ENCODE measurements at regions of chr1 and their contacts with region 1.

Region 1: GRCh38 chr1:151254217-151255213 is at the start of gene PSMD4:
- DNase-seq: peak; percentile 86 to 98 (median 93)
- ATAC-seq: peak; percentile 89
- H3K4me3 ChIP-seq: peak within 1 kb of the TSS; percentile 66 to 90
- H3K4me3 Mint-ChIP-seq: peak within 1 kb of the TSS; percentile 98
- H3K27ac ChIP-seq: peak within 1 kb of the TSS; percentile 53 to 81
- H3K27ac Mint-ChIP-seq: peak within 1 kb of the TSS; percentile 98
- H3K4me1 ChIP-seq: peaks cover 10% of the 10 kb centered on the region
- H3K4me1 Mint-ChIP-seq: peaks cover 32% of the 10 kb centered on the region
- H3K27me3 ChIP-seq: no peaks in the 10 kb centered on the region
- H3K27me3 Mint-ChIP-seq: no peaks in the 10 kb centered on the region
- CTCF ChIP-seq: no peak
- total RNA-seq, gene PSMD4: 55.1 to 56.7 TPM

Region 2: GRCh38 chr1:150363426-150364230 is 890.9 kb before region 1 on chr1 and contains the start of gene RPRD2:
- CTCF ChIA-PET with region 1: no interaction called
- POLR2A ChIA-PET with region 1: no interaction called
- intact Hi-C with region 1: loop called in 1 of 2 experiments (anchors 5 kb)
- DNase-seq: peak; percentile 97 to 100 (median 98)
- ATAC-seq: peak; percentile 95
- H3K4me3 ChIP-seq: peak within 1 kb of the TSS; percentile 69 to 90
- H3K4me3 Mint-ChIP-seq: peak within 1 kb of the TSS; percentile 99
- H3K27ac ChIP-seq: peak within 1 kb of the TSS; percentile 74 to 94
- H3K27ac Mint-ChIP-seq: peak within 1 kb of the TSS; percentile 99
- H3K4me1 ChIP-seq: peaks cover 7% of the 10 kb centered on the region
- H3K4me1 Mint-ChIP-seq: peaks cover 36% of the 10 kb centered on the region
- H3K27me3 ChIP-seq: no peaks in the 10 kb centered on the region
- H3K27me3 Mint-ChIP-seq: no peaks in the 10 kb centered on the region
- CTCF ChIP-seq: no peak
- total RNA-seq, gene RPRD2: 31.8 to 35.0 TPM

Region 3: GRCh38 chr1:151024540-151025146 is 229.9 kb before region 1 on chr1:
- CTCF ChIA-PET with region 1: interaction called, 5 read pairs
- POLR2A ChIA-PET with region 1: interaction called, 3 read pairs
- intact Hi-C with region 1: loop called (anchors 1 to 10 kb)
- DNase-seq: peak; percentile 77 to 94 (median 89)
- ATAC-seq: peak; percentile 100
- H3K4me3 ChIP-seq: peak overlapping the region in 1 of 2 experiments; percentile 40
- H3K4me3 Mint-ChIP-seq: peak overlapping the region; percentile 58
- H3K27ac ChIP-seq: no peak overlapping the region
- H3K27ac Mint-ChIP-seq: no peak overlapping the region
- H3K4me1 ChIP-seq: peaks cover 7% of the 10 kb centered on the region
- H3K4me1 Mint-ChIP-seq: peaks cover 7% of the 10 kb centered on the region
- H3K27me3 ChIP-seq: no peaks in the 10 kb centered on the region
- H3K27me3 Mint-ChIP-seq: no peaks in the 10 kb centered on the region
- CTCF ChIP-seq: peak; percentile 77

Region 4: DNA sequence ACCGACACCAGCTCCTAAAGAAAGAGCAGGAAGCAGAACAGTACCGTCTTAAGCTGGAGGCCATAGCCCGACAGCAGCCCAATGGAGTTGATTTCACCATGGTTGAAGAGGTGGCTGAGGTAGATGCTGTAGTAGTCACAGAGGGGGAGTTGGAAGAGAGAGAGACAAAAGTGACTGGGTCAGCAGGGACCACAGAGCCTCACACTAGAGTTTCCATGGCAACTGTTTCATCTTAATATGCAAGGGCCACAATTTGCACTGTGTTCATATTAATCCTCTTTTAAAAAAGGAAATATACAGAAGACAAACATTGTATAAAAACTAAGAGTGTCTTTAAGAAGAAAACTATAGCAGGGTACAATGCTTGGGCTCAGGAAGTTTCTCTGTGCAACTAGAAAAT is 136.5 kb before region 1 on chr1:
- CTCF ChIA-PET with region 1: no interaction called
- POLR2A ChIA-PET with region 1: no interaction called
- intact Hi-C with region 1: no loop called
- DNase-seq: no peak
- ATAC-seq: no peak
- H3K4me3 ChIP-seq: no peak overlapping the region
- H3K4me3 Mint-ChIP-seq: no peak overlapping the region
- H3K27ac ChIP-seq: no peak overlapping the region
- H3K27ac Mint-ChIP-seq: peak overlapping the region; percentile 49
- H3K4me1 ChIP-seq: no peaks in the 10 kb centered on the region
- H3K4me1 Mint-ChIP-seq: no peaks in the 10 kb centered on the region
- H3K27me3 ChIP-seq: no peaks in the 10 kb centered on the region
- H3K27me3 Mint-ChIP-seq: no peaks in the 10 kb centered on the region
- CTCF ChIP-seq: no peak

Region 5: GRCh38 chr1:151156515-151156819 is 98.0 kb before region 1 on chr1 and contains the start of gene TNFAIP8L2:
- CTCF ChIA-PET with region 1: interaction called, 14 read pairs
- POLR2A ChIA-PET with region 1: interaction called, 3 read pairs
- intact Hi-C with region 1: loop called in 1 of 2 experiments (anchors 5 kb)
- DNase-seq: peak; percentile 45 to 86 (median 74)
- ATAC-seq: peak; percentile 83
- H3K4me3 ChIP-seq: peak within 1 kb of the TSS; percentile 83 to 89
- H3K4me3 Mint-ChIP-seq: peak within 1 kb of the TSS; percentile 97
- H3K27ac ChIP-seq: peak within 1 kb of the TSS; percentile 55 to 70
- H3K27ac Mint-ChIP-seq: peak within 1 kb of the TSS; percentile 92
- H3K4me1 ChIP-seq: peaks cover 35% of the 10 kb centered on the region
- H3K4me1 Mint-ChIP-seq: peaks cover 55% of the 10 kb centered on the region
- H3K27me3 ChIP-seq: no peaks in the 10 kb centered on the region
- H3K27me3 Mint-ChIP-seq: no peaks in the 10 kb centered on the region
- CTCF ChIP-seq: no peak
- total RNA-seq, gene TNFAIP8L2: 0.62 to 0.86 TPM

Region 6: GRCh38 chr1:151198255-151199127 is 56.0 kb before region 1 on chr1 and contains the start of gene PIP5K1A:
- CTCF ChIA-PET with region 1: interaction called, 10 read pairs
- POLR2A ChIA-PET with region 1: no interaction called
- intact Hi-C with region 1: loop called (anchors 1 kb)
- DNase-seq: peak; percentile 96 to 100 (median 99)
- ATAC-seq: peak; percentile 94
- H3K4me3 ChIP-seq: peak within 1 kb of the TSS; percentile 88 to 91
- H3K4me3 Mint-ChIP-seq: peak within 1 kb of the TSS; percentile 97
- H3K27ac ChIP-seq: peak within 1 kb of the TSS; percentile 78 to 86
- H3K27ac Mint-ChIP-seq: peak within 1 kb of the TSS; percentile 92
- H3K4me1 ChIP-seq: peaks cover 28% of the 10 kb centered on the region
- H3K4me1 Mint-ChIP-seq: peaks cover 45% of the 10 kb centered on the region
- H3K27me3 ChIP-seq: no peaks in the 10 kb centered on the region
- H3K27me3 Mint-ChIP-seq: no peaks in the 10 kb centered on the region
- CTCF ChIP-seq: no peak
- total RNA-seq, gene PIP5K1A: 37.2 to 48.2 TPM

Region 7: GRCh38 chr1:151340870-151341754 is 86.6 kb after region 1 on chr1:
- CTCF ChIA-PET with region 1: interaction called, 13 read pairs
- POLR2A ChIA-PET with region 1: interaction called, 3 read pairs
- intact Hi-C with region 1: no loop called
- DNase-seq: peak in 8 of 9 experiments; percentile 24 to 86 (median 54)
- ATAC-seq: peak; percentile 92
- H3K4me3 ChIP-seq: no peak overlapping the region
- H3K4me3 Mint-ChIP-seq: no peak overlapping the region
- H3K27ac ChIP-seq: peak overlapping the region in 1 of 2 experiments; percentile 42
- H3K27ac Mint-ChIP-seq: peak overlapping the region; percentile 50
- H3K4me1 ChIP-seq: peaks cover 6% of the 10 kb centered on the region
- H3K4me1 Mint-ChIP-seq: peaks cover 26% of the 10 kb centered on the region
- H3K27me3 ChIP-seq: no peaks in the 10 kb centered on the region
- H3K27me3 Mint-ChIP-seq: no peaks in the 10 kb centered on the region
- CTCF ChIP-seq: peak; percentile 81

Measured in CD8-positive, alpha-beta T cell (primary cell).